Vagina (tissue), 2 donors: ENCODE measurements at regions of chr13 and their contacts with region 1.

Region 1: GRCh38 chr13:97359181-97360057 is 74.5 kb upstream of the RAP2A start:
- DNase-seq: no peak
- H3K4me3 ChIP-seq: no peak overlapping the region
- H3K27ac ChIP-seq: peak overlapping the region; percentile 56
- H3K4me1 ChIP-seq: peaks cover 7% of the 10 kb centered on the region
- H3K27me3 ChIP-seq: no peaks in the 10 kb centered on the region
- CTCF ChIP-seq: peak; percentile 72 to 92 (median 76)
- POLR2A ChIP-seq: no peak

Region 2: GRCh38 chr13:97411984-97412383 is 52.6 kb after region 1 on chr13:
- intact Hi-C with region 1: loop called (anchors 10 kb)
- DNase-seq: no peak
- H3K4me3 ChIP-seq: no peak overlapping the region
- H3K27ac ChIP-seq: no peak overlapping the region
- H3K4me1 ChIP-seq: no peaks in the 10 kb centered on the region
- H3K27me3 ChIP-seq: no peaks in the 10 kb centered on the region
- CTCF ChIP-seq: no peak
- POLR2A ChIP-seq: no peak